ENCODE measurements at regions of chr11 and their contacts with region 1.

Region 1: DNA sequence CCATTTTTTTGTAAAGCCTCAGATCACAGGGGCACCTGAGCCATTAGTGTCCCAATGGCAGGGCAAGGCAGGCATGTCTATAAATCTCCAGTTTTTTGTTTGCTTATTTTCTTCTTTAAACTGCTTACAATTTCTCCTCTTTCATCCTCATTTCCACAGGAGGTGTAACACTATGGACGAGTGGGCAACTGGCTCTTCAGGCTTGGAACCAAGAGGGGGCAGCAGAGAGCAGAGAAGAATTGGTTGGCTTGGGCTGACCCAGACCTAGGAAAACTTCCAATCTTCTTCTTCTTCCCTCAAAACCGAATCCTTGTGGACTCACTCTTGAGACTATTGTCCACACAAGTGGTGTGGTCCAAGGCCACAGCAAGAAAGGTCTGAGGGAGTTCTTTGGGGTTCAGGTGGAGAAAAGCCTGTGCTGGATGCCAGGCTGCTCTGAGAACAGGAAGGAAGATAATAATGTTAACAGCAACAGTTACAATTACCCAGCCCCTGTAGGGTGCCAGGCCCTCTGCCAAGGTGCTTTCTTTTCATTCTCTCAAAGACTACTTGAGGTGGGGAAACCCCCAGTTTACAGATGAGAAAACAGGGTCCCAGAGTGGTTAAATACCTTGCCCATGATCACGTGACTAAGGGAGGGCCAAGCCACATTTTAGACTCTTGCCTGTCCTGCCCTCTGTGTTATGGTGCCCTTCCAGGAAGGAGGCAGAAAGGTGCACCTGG is 70.7 kb upstream of the E2F8 start:
- DNase-seq: peak in 5 of 6 donors; percentile 43 to 82 (median 64)
- ATAC-seq: peak; percentile 86 to 96 (median 94)
- H3K4me3 ChIP-seq: no peak overlapping the region
- H3K27ac ChIP-seq: no peak overlapping the region
- H3K4me1 ChIP-seq: no peaks in the 10 kb centered on the region
- H3K27me3 ChIP-seq: no peaks in the 10 kb centered on the region
- CTCF ChIP-seq: peak; percentile 68 to 82 (median 76)

Region 2: DNA sequence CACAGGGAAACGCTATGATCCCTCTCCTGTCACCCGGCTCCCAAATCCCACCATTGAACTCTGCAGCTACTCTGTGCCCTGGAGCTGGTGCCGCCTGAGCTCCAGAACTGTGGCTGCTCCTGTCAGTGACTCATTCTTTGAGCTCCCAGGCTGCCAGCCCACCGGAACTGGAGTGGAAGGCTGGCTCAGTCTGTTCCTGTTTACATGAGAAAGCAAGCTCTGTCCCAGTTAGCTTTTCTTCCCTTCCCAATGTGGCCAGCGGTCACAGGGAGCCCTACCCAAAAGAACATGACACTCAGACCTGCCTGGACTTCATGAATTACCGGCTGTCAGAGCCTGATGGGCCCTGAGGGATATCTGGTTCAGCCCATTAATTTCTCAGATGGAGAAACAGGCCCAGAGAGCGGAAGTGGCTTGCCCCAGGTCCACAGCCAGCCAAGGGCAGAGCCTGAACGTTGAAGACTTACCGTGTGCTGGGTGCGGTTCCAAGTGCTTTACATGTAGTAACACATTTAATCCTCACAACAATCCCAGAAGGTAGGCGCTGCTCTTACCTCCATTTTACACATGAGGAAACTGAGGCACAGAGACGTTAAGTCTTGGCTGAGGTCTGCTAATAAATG is 561.7 kb before region 1 on chr11:
- intact Hi-C with region 1: no loop called
- DNase-seq: no peak
- ATAC-seq: peak in 1 of 4 donors; percentile 56
- H3K4me3 ChIP-seq: no peak overlapping the region
- H3K27ac ChIP-seq: no peak overlapping the region
- H3K4me1 ChIP-seq: no peaks in the 10 kb centered on the region
- H3K27me3 ChIP-seq: no peaks in the 10 kb centered on the region
- CTCF ChIP-seq: no peak

Region 3: DNA sequence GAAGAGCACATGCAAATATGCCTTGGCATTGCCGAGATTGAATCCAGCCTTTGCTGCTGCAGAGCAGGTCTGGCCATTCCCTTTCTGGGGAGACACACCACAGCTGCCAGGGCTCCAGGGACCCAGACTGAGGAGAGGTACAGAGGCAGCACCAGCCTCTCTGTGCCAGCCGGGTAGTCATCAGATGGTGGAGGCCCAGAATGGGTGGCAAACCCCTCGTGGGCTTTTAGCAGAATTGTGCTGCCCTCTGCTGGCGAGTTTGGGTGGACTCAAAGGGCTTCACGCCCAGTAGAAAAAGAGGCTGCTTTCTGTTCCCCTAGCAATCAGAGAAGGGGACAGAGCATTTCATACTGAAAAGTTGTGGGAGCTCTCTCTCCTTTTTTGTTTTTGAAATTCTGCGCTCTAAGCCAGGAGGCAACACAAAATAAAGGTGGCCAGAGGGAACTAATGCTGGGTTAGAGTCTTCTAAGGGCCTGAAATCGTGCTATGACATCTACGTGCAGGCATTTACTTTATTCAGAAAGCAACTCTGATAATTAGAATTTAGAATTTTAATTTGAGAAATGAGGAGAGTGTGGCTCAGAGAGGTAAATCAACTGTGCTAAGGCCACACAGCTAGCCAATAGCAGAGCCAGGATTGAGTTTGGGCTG is 242.3 kb after region 1 on chr11:
- intact Hi-C with region 1: loop called in 2 of 3 experiments (anchors 5 kb)
- DNase-seq: peak; percentile 62 to 95 (median 88)
- ATAC-seq: peak; percentile 86 to 93 (median 90)
- H3K4me3 ChIP-seq: no peak overlapping the region
- H3K27ac ChIP-seq: no peak overlapping the region
- H3K4me1 ChIP-seq: no peaks in the 10 kb centered on the region
- H3K27me3 ChIP-seq: no peaks in the 10 kb centered on the region
- CTCF ChIP-seq: peak; percentile 72 to 87 (median 79)

Measured in pancreas (tissue), 10 donors.